ENCODE measurements at regions of chr17 and their contacts with region 1.

Region 1: GRCh38 chr17:76103274-76104139 is at the start of gene EXOC7:
- DNase-seq: peak; percentile 93
- H3K4me3 Mint-ChIP-seq: peak within 1 kb of the TSS; percentile 96
- H3K27ac Mint-ChIP-seq: peak within 1 kb of the TSS; percentile 93
- H3K4me1 Mint-ChIP-seq: peaks cover 15% of the 10 kb centered on the region
- H3K27me3 Mint-ChIP-seq: peaks cover under 1% of the 10 kb centered on the region
- total RNA-seq, gene EXOC7: 108 and 116 TPM in 2 replicates

Region 2: GRCh38 chr17:76014184-76014924 is 89.2 kb before region 1 on chr17:
- intact Hi-C with region 1: loop called (anchors 1 kb)
- DNase-seq: peak; percentile 67
- H3K4me3 Mint-ChIP-seq: no peak overlapping the region
- H3K27ac Mint-ChIP-seq: no peak overlapping the region
- H3K4me1 Mint-ChIP-seq: no peaks in the 10 kb centered on the region
- H3K27me3 Mint-ChIP-seq: peaks cover 2% of the 10 kb centered on the region

Region 3: DNA sequence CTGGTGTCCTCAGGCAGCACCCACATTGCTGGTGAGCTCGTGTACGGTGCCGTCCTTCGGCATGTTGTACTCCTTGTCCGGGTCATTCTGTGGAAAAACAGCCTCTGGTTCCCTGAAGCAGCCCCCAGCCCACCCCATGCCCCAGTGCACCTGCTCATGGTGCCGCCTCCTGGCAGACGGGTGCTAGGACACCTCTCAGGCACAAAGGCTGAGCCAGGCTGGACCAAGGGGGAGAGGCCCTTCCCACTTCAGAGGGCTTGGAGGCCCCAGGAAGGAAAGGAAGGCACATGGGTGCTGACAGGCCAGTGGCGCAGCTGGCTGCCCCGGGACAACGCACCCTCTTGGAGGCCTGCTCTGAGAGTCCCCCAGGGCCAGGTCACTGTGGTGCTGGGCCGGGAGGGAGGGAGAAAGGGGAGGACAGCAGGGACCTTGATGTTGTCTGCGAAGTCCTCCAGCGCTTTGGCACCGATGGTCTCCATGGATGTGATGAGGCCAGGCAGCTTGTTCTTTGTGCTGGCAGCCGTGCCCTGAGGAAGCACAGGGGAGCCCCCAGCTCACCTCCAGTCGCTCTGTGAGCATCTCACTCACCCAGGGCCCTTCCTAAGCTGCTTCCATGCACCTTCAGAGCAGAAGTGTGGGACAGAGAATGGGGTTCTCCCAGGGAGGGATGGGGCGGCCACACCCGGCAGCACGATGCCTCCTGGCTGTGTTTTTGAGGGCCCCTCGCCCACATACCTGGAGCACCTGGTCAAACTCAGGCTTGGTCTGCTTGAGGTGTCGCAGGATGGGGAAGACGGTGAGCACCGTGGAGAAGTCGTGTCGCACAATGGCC is 15.3 kb before region 1 on chr17:
- intact Hi-C with region 1: no loop called
- DNase-seq: no peak
- H3K4me3 Mint-ChIP-seq: no peak overlapping the region
- H3K27ac Mint-ChIP-seq: no peak overlapping the region
- H3K4me1 Mint-ChIP-seq: no peaks in the 10 kb centered on the region
- H3K27me3 Mint-ChIP-seq: no peaks in the 10 kb centered on the region

Region 4: GRCh38 chr17:76121932-76122430 is 18.5 kb after region 1 on chr17:
- intact Hi-C with region 1: loop called (anchors 2 kb)
- DNase-seq: no peak
- H3K4me3 Mint-ChIP-seq: peak overlapping the region; percentile 39
- H3K27ac Mint-ChIP-seq: no peak overlapping the region
- H3K4me1 Mint-ChIP-seq: peaks cover 17% of the 10 kb centered on the region
- H3K27me3 Mint-ChIP-seq: peaks cover 5% of the 10 kb centered on the region

Region 5: GRCh38 chr17:76141212-76142038 is 37.9 kb after region 1 on chr17 and contains the start of gene FOXJ1:
- intact Hi-C with region 1: loop called (anchors 1 kb)
- DNase-seq: peak; percentile 91
- H3K4me3 Mint-ChIP-seq: peak within 1 kb of the TSS; percentile 74
- H3K27ac Mint-ChIP-seq: peak within 1 kb of the TSS; percentile 65
- H3K4me1 Mint-ChIP-seq: peaks cover 53% of the 10 kb centered on the region
- H3K27me3 Mint-ChIP-seq: peaks cover 14% of the 10 kb centered on the region
- total RNA-seq, gene FOXJ1: 0.10 TPM in 1 of 2 replicates, not detected in the other

Region 6: DNA sequence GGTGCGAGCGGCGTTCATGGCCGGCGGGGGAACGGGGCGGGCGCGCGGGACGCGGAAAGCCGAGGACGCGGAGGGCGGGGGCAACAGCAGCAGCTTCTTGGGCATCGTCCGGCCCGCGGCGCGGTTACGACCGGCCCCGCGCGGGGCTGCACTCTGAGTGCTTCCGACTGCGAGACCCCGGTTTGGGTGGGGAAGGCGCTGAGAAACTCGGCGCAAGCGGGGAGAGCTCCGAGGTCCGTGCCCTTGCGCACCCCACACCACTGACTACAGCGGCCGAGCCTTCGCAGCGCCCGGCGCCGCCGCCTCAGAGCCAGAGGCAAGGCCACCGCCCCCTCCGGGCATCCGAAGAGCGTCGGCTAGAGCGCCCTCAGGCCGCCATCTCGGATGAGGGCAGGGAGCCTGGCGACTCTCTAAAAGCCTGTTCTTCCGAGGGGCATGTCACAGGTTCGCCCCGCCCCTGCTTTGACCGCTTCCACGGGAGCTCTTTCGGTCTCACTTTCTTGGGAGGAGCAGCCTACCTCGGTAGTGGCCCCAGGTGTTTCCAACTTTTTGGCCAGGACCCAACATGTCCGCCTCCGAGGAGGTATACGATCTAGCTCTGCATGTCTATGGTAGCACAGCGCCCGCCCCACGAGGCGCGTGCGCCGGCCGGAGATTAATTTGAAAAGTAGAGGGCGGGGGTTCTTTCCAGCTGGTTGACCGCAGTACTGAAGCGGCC is 250.3 kb after region 1 on chr17 and contains the start of gene PRPSAP1:
- intact Hi-C with region 1: loop called (anchors 2 kb)
- DNase-seq: peak; percentile 82
- H3K4me3 Mint-ChIP-seq: peak within 1 kb of the TSS; percentile 93
- H3K27ac Mint-ChIP-seq: peak within 1 kb of the TSS; percentile 99
- H3K4me1 Mint-ChIP-seq: peaks cover 28% of the 10 kb centered on the region
- H3K27me3 Mint-ChIP-seq: peaks cover 3% of the 10 kb centered on the region
- total RNA-seq, gene PRPSAP1: 41.2 and 44.0 TPM in 2 replicates

Measured in activated T-helper 1 cell treated with anti-CD3 and anti-CD28 coated beads, Interleukin-12 subunit alpha, Interleukin-12 subunit beta, Interleukin-2, Interleukin-4 antibody, amounts not matched to agents 30 ng/mL and 10 ng/mL and 1 ng/mL, durations not matched to agents 14 hours and 24 hours and 36 hours (primary cell).